Activated B cell treated with CpG ODN at 0.5 μM for 24 hours (primary cell): ENCODE measurements at regions of chr13 and their contacts with region 1.

Region 1: DNA sequence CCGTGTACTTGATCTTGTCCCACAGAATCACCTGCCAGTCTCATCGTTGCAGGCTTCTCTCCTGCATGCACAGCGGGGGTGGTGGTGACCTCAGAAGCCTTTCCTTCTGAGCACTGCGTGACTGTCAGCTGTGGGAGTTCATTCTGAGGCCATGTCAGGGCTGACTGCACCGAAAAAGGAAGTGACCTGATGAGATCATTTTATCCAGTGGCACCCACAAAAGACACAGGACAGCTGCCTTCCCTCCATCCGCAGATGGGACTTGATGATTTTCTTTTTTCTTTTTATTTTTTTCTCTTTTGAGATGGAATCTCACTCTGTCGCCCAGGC is 89.7 kb downstream of the RAB20 start:
- DNase-seq: peak; percentile 59
- ATAC-seq: peak; percentile 93
- H3K4me3 Mint-ChIP-seq: peak overlapping the region; percentile 73
- H3K27ac Mint-ChIP-seq: peak overlapping the region; percentile 83
- H3K4me1 Mint-ChIP-seq: peaks cover 55% of the 10 kb centered on the region
- H3K27me3 Mint-ChIP-seq: no peaks in the 10 kb centered on the region
- CTCF ChIP-seq: no peak

Region 2: GRCh38 chr13:110509971-110510786 is 38.4 kb after region 1 on chr13:
- CTCF ChIA-PET with region 1: no interaction called
- POLR2A ChIA-PET with region 1: no interaction called
- intact Hi-C with region 1: no loop called
- DNase-seq: no peak
- ATAC-seq: peak; percentile 25
- H3K4me3 Mint-ChIP-seq: no peak overlapping the region
- H3K27ac Mint-ChIP-seq: no peak overlapping the region
- H3K4me1 Mint-ChIP-seq: peaks cover 9% of the 10 kb centered on the region
- H3K27me3 Mint-ChIP-seq: no peaks in the 10 kb centered on the region
- CTCF ChIP-seq: no peak

Region 3: DNA sequence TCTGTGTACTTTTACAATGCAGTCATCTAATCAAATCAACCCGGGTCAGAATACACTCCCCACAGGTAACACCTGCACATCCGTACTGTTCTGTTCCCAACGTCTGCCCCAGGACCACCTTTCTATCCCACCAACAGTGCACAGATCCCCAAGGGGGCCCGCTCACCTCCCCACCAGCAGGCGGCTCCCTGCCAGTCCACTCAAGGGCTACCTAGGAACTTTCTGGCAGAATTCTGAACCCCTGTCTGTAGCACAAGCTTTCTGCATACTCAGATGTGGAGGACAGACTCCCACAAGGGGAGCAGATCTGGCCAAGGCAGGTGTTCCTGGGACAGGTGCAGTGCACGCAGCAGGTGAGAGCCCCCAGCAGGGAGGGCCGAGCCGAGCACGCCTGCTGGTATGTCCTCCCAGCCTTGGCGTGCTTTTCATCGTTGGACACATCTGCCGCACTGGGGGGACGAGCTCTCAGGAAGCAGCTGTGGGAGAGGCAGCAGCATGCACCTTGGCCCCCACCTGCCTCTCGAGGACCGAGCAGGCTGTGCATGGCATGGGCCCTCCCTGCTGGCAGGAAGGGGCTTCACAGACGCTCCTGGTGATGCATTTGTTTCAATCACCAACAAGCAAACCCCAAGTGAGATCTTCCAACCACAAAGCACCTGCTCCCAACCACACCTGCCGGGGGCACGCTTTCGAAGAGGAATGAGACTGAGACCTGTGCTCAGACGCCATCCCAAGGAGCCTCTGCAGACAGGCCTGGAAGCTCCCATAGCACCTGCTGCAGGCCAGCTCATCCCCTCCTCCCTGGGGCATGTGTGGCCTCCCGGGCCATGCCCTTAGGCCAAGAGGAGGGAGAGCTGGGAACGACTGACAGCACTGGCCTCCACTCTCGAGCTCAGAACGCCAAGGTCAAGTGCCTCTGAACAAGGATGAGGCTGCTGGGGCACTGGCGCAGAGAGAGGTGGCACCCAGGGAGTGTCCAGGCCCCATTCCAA is 53.8 kb after region 1 on chr13:
- CTCF ChIA-PET with region 1: no interaction called
- POLR2A ChIA-PET with region 1: no interaction called
- intact Hi-C with region 1: loop called (anchors 5 kb)
- DNase-seq: no peak
- ATAC-seq: peak; percentile 77
- H3K4me3 Mint-ChIP-seq: no peak overlapping the region
- H3K27ac Mint-ChIP-seq: no peak overlapping the region
- H3K4me1 Mint-ChIP-seq: peaks cover 31% of the 10 kb centered on the region
- H3K27me3 Mint-ChIP-seq: no peaks in the 10 kb centered on the region
- CTCF ChIP-seq: no peak

Region 4: GRCh38 chr13:110615322-110616102 is 143.7 kb after region 1 on chr13 and contains the start of gene NAXD:
- CTCF ChIA-PET with region 1: no interaction called
- POLR2A ChIA-PET with region 1: interaction called, 3 read pairs
- intact Hi-C with region 1: loop called (anchors 5 kb)
- DNase-seq: peak; percentile 66
- ATAC-seq: peak; percentile 82
- H3K4me3 Mint-ChIP-seq: peak within 1 kb of the TSS; percentile 94
- H3K27ac Mint-ChIP-seq: peak within 1 kb of the TSS; percentile 89
- H3K4me1 Mint-ChIP-seq: peaks cover 37% of the 10 kb centered on the region
- H3K27me3 Mint-ChIP-seq: no peaks in the 10 kb centered on the region
- CTCF ChIP-seq: no peak
- total RNA-seq, gene NAXD: 31.1 and 32.7 TPM in 2 replicates